ENCODE measurements at regions of chr17 and their contacts with region 1.

Region 1: GRCh38 chr17:30477083-30477773 is at the start of gene GOSR1:
- DNase-seq: peak; percentile 94 to 96 (median 94)
- ATAC-seq: peak; percentile 99 to 100 (median 100)
- H3K4me3 ChIP-seq: peak within 1 kb of the TSS; percentile 63 to 94 (median 84)
- H3K27ac ChIP-seq: peak within 1 kb of the TSS; percentile 83 to 97 (median 93)
- H3K4me1 ChIP-seq: peaks cover 0 to 32% (median 19%) of the 10 kb centered on the region in 12 donors
- H3K27me3 ChIP-seq: no peaks in the 10 kb centered on the region
- CTCF ChIP-seq: peak; percentile 70 to 90 (median 81)
- POLR2A ChIP-seq: peak in 1 of 2 donors; percentile 40
- total RNA-seq, gene GOSR1: 24.9 to 39.7 (median 32.0) TPM

Region 2: GRCh38 chr17:30124273-30124796 is 352.9 kb before region 1 on chr17:
- intact Hi-C with region 1: loop called in 1 of 10 experiments (anchors 10 kb)
- DNase-seq: no peak
- ATAC-seq: no peak
- H3K4me3 ChIP-seq: no peak overlapping the region
- H3K27ac ChIP-seq: no peak overlapping the region
- H3K4me1 ChIP-seq: peaks cover 0 to 48% (median 9%) of the 10 kb centered on the region in 12 donors
- H3K27me3 ChIP-seq: no peaks in the 10 kb centered on the region
- CTCF ChIP-seq: no peak
- POLR2A ChIP-seq: no peak

Region 3: DNA sequence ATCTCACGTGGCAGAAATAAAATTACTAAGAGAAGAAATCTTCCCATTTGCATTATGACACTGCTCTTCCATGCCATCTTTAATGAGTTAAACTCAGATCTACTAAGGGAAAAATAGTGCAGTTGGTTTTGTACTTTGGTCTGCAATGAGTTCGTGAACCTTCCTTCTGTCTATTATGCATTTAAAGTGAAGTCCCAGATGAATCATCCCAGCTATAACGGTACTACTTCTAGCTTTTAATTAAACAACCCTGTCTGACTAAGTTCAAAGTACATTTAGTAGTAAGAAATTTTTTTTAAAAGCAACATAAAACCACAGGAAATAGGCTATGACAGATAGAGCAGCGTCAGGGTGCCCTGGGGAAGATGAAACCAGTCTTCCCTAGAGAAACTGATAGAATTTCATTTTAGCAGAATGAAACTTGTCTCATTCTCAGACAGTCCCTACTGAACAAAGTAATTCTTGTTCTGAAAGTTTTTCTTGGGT is 145.1 kb before region 1 on chr17:
- intact Hi-C with region 1: no loop called
- DNase-seq: no peak
- ATAC-seq: no peak
- H3K4me3 ChIP-seq: no peak overlapping the region
- H3K27ac ChIP-seq: peak overlapping the region in 1 of 12 donors; percentile 3
- H3K4me1 ChIP-seq: peaks cover 0 to 8% (median 0%) of the 10 kb centered on the region in 12 donors
- H3K27me3 ChIP-seq: peaks cover 0 to 8% (median 0%) of the 10 kb centered on the region in 9 donors
- CTCF ChIP-seq: no peak
- POLR2A ChIP-seq: no peak

Region 4: DNA sequence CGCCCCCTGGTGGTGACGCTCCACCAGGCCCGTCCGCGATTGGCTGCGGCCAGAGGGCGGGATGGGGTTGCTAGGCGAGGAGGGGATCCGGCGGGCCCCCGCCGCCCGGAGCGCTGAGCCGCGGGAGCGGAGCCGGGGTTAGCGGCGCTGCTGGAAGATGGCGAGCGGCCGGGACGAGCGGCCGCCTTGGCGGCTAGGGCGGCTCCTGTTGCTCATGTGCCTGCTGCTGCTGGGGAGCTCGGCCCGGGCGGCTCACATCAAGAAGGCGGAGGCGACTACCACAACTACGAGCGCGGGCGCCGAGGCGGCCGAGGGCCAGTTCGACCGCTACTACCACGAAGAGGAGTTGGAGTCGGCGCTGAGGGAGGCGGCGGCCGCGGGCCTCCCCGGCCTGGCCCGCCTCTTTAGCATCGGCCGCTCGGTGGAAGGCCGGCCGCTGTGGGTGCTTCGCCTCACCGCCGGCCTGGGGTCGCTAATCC is 98.4 kb before region 1 on chr17 and contains the start of gene CPD:
- intact Hi-C with region 1: loop called in 1 of 10 experiments (anchors 1 kb)
- DNase-seq: peak; percentile 97 to 98 (median 98)
- ATAC-seq: peak; percentile 98 to 99 (median 99)
- H3K4me3 ChIP-seq: peak within 1 kb of the TSS; percentile 73 to 97 (median 88)
- H3K27ac ChIP-seq: peak within 1 kb of the TSS; percentile 71 to 93 (median 89)
- H3K4me1 ChIP-seq: peaks cover 0 to 58% (median 40%) of the 10 kb centered on the region in 12 donors
- H3K27me3 ChIP-seq: no peaks in the 10 kb centered on the region
- CTCF ChIP-seq: peak in 7 of 12 donors; percentile 6 to 42 (median 34)
- POLR2A ChIP-seq: peak; percentile 74 to 93
- total RNA-seq, gene CPD: 18.9 to 54.2 (median 31.8) TPM

Region 5: DNA sequence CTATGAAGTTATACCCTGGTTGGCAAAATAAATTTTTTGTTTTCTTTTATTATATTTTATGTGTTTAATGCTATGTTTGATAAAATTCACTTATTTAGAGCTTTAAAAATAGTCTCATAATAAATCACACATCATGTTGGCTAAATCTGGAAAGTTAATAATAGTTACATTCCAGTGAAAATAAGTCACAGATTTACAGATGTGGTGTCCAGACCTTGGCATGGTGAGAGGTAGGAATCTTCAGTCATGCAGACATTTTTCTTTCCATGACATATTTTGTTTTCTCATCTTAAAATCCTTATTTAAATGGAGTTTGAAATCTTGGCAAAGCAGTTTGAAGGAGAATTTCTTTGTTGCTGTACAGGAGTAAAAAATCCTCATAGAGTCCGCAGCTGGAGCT is 48.1 kb before region 1 on chr17:
- intact Hi-C with region 1: no loop called
- DNase-seq: no peak
- ATAC-seq: no peak
- H3K4me3 ChIP-seq: no peak overlapping the region
- H3K27ac ChIP-seq: peak overlapping the region in 1 of 12 donors; percentile 8
- H3K4me1 ChIP-seq: peaks cover 0 to 18% (median 0%) of the 10 kb centered on the region in 12 donors
- H3K27me3 ChIP-seq: no peaks in the 10 kb centered on the region
- CTCF ChIP-seq: no peak
- POLR2A ChIP-seq: no peak

Region 6: DNA sequence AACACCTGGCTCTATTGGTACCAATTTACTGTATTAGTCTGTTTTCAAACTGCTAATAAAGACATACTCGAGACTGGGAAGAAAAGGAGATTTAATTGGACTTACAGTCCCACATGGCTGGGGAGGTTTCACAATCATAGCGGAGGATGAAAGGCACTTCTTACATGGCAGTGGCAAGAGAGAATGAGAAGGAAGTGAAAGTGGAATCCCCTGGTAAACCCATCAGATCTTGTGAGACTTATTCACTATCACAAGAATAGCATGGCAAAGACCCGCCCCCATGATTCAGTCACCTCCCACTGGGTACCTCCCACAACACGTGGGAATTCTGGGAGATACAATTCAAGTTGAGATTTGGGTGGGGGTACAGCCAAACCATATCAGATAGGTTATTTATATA is 22.6 kb before region 1 on chr17:
- intact Hi-C with region 1: no loop called
- DNase-seq: no peak
- ATAC-seq: no peak
- H3K4me3 ChIP-seq: no peak overlapping the region
- H3K27ac ChIP-seq: no peak overlapping the region
- H3K4me1 ChIP-seq: peaks cover 0 to 2% (median 0%) of the 10 kb centered on the region in 12 donors
- H3K27me3 ChIP-seq: no peaks in the 10 kb centered on the region
- CTCF ChIP-seq: no peak
- POLR2A ChIP-seq: no peak

Region 7: DNA sequence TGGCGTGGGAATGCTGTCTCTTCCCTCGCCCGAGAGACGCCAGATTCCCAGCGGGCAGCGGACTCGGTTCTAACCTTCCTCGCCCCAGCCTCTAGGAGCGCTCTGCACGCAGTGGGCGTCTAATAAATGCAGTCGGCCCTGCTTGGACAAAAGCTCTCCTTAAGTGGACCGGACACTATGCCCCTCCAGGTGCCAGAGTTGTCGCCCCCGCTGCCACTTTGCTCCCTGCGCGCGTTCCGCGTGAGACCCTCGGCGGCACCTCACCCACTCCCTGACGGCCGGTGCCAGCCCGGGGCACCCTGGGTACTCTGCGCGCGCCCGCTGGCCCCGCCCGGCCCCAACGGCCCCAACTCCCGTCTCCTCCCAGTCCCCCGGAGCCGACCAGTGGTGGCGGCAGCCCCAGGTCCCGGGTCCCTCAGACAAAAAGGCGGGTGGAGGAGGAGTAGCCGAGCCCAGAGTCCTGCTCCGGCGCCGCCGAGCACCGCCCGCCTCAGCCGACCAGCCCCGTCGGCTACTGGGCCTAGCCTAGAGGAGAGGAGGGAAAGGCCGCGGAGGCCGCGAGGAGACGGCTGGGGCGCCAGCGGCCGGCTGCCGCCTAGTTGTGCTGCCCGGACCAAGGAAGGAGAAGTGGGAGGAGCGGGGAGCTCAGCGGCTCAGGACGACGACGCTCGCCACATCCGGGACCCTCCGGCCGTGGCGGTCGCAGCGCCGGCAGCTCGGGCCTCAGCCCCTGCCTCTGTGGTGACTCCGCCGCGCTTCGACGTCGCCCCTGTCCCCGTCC is 123.0 kb after region 1 on chr17:
- intact Hi-C with region 1: loop called in 4 of 10 experiments (anchors 2 to 10 kb)
- DNase-seq: peak; percentile 84 to 91 (median 88)
- ATAC-seq: peak; percentile 95 to 99 (median 99)
- H3K4me3 ChIP-seq: peak overlapping the region; percentile 72 to 95 (median 84)
- H3K27ac ChIP-seq: peak overlapping the region; percentile 81 to 99 (median 96)
- H3K4me1 ChIP-seq: peaks cover 0 to 18% (median 6%) of the 10 kb centered on the region in 12 donors
- H3K27me3 ChIP-seq: no peaks in the 10 kb centered on the region
- CTCF ChIP-seq: peak in 11 of 12 donors; percentile 18 to 62 (median 40)
- POLR2A ChIP-seq: peak in 1 of 2 donors; percentile 73

Region 8: GRCh38 chr17:30824356-30825145 is 347.3 kb after region 1 on chr17 and contains the start of gene CRLF3:
- intact Hi-C with region 1: loop called in 1 of 10 experiments (anchors 2 kb)
- DNase-seq: peak; percentile 90 to 95 (median 92)
- ATAC-seq: peak; percentile 91 to 99 (median 98)
- H3K4me3 ChIP-seq: peak within 1 kb of the TSS; percentile 68 to 99 (median 93)
- H3K27ac ChIP-seq: peak within 1 kb of the TSS in 11 of 12 donors; percentile 78 to 93 (median 85)
- H3K4me1 ChIP-seq: peaks cover 0 to 54% (median 19%) of the 10 kb centered on the region in 12 donors
- H3K27me3 ChIP-seq: no peaks in the 10 kb centered on the region
- CTCF ChIP-seq: peak; percentile 32 to 90 (median 68)
- POLR2A ChIP-seq: peak in 1 of 2 donors; percentile 84
- total RNA-seq, gene CRLF3: 4.4 to 12.3 (median 5.5) TPM